Esophagus squamous epithelium (tissue), 5 donors: ENCODE measurements at regions of chr6 and their contacts with region 1.

Region 1: DNA sequence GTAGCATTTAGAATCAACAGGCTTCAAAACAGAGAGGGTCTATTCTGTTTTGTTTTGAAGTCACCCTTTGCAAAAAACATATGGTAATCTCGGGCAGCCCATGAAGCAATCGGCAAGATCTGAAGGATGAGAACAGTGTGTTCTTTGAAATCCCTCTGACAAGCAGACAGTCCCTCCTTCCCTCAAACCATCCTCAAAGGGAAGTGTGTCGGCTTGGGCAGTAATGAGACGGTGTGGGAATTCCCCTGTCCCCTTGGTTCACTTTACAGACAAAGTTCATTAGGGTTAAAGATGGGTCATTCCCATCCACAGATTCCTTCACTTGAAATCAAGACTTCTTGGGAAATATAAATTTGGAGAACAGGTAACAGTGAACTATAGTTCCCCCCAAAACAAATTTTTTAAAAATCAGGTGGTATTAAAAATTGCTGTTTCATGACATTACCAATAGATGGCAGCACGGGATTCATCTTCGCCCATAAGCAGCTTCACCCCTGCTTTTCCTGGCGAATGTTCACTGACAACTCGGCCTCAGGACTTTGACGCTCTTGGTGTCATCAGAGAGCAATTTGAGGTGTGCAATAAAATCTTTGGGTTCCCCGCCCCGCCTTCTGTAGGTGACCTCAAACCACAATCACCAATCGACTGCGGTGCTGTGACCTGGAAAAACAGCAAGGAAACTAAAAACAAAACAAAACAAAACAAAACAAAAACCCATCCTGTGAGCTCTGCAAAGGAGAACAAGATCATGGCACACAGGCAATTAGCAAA is 159.3 kb upstream of the TNFAIP3 start:
- DNase-seq: peak; percentile 21
- H3K4me3 ChIP-seq: peak overlapping the region in 1 of 4 donors; percentile 42
- H3K27ac ChIP-seq: peak overlapping the region in 2 of 4 donors; percentile 11 to 45
- H3K4me1 ChIP-seq: peaks cover 0 to 27% (median 9%) of the 10 kb centered on the region in 3 donors
- H3K27me3 ChIP-seq: no peaks in the 10 kb centered on the region
- CTCF ChIP-seq: peak; percentile 62 to 82 (median 69)
- POLR2A ChIP-seq: no peak

Region 2: DNA sequence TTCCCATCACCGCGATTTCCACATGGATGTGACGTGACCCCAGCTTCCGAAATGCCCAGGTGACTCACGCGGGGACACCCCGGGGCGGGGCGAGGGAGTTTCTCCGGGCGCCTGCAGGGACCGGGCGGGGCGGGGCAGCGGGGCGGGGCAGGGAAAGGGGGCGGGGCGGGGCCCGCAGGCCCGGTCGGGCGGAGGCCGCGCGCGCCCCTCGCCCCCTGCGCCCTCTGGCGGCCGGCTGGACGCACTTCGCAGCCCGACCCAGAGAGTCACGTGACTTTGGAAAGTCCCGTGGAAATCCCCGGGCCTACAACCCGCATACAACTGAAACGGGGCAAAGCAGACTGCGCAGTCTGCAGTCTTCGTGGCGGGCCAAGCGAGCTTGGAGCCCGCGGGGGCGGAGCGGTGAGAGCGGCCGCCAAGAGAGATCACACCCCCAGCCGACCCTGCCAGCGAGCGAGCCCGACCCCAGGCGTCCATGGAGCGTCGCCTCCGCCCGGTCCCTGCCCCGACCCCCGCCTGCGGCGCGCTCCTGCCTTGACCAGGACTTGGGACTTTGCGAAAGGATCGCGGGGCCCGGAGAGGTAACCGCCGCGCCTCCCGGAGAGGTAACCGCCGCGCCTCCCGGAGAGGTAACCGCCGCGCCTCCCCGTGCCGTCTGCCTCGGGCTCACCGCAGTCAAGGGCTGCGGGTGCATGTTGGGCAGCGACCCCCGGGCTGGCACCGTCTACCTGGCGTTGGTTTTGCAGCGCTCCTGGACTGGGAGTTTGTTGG is 159.3 kb after region 1 on chr6 and contains the start of gene TNFAIP3:
- intact Hi-C with region 1: loop called (anchors 5 kb)
- DNase-seq: peak; percentile 88
- H3K4me3 ChIP-seq: peak within 1 kb of the TSS; percentile 63 to 96 (median 88)
- H3K27ac ChIP-seq: peak within 1 kb of the TSS; percentile 92 to 98 (median 96)
- H3K4me1 ChIP-seq: peaks cover 18 to 67% (median 32%) of the 10 kb centered on the region in 3 donors
- H3K27me3 ChIP-seq: no peaks in the 10 kb centered on the region
- CTCF ChIP-seq: peak; percentile 54 to 95 (median 92)
- POLR2A ChIP-seq: peak in 3 of 4 donors; percentile 62 to 96 (median 96)
- total RNA-seq, gene TNFAIP3: 4.2 to 21.7 (median 7.7) TPM

Region 3: GRCh38 chr6:137975188-137975940 is 267.6 kb after region 1 on chr6:
- intact Hi-C with region 1: loop called (anchors 10 kb)
- DNase-seq: no peak
- H3K4me3 ChIP-seq: no peak overlapping the region
- H3K27ac ChIP-seq: peak overlapping the region in 2 of 4 donors; percentile 38 to 49
- H3K4me1 ChIP-seq: peaks cover 4 to 38% (median 4%) of the 10 kb centered on the region in 3 donors
- H3K27me3 ChIP-seq: no peaks in the 10 kb centered on the region
- CTCF ChIP-seq: peak in 3 of 6 experiments; percentile 26 to 51 (median 48)
- POLR2A ChIP-seq: no peak